PC-9 (cell line): ENCODE measurements at regions of chr2 and their contacts with region 1.

Region 1: DNA sequence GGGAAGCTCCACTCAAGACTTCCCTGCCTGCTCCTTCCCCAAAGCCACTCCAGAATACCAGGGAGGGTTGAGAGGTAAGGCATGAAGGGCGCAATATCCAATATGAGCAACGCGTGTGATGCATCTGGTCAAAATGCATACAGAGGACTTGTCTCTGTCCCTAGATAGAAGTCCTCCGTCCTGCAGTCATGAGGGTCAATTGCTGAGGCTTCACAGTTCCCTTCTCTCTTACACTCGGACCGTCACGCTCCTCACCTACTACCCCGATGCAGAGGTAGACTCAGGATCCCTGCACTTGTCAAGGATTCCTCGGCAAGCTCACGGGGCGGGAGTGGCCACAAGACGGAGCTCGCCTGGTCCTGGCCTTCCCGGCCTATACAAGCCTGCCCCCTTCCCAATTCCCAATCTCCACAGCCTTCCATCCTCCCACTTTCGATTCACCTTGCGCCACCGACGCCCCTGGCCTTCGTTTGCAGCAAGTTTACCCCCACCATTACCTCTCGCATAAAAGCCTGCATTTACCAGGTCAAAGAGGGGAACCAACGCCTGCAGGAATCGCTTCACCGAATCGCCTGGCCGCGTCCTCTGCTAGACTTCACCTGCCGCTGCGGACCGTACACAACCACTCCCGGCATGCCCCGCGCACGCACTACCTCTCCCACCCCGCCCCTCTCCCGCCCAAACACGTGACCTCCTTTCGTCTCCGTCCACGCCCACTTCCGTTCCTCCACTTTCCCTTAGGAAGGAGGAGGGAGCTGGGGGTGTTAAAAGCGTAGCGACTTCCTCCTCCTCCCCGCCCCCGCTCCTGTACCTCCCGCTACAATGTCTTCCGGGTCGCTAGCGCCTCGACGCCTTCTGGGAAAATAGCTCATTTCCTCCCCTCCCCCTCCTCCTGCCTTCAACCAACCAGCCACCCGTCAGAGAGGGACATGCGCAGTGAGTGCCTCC is at the start of gene ORC4:
- DNase-seq: peak; percentile 93 to 94
- H3K4me3 ChIP-seq: peak within 1 kb of the TSS; percentile 77
- H3K27ac ChIP-seq: peak within 1 kb of the TSS; percentile 68
- H3K4me1 ChIP-seq: peaks cover 28% of the 10 kb centered on the region
- H3K27me3 ChIP-seq: no peaks in the 10 kb centered on the region
- CTCF ChIP-seq: peak; percentile 36; the same call in 1 of the 2 replicates
- total RNA-seq, gene ORC4: 28.4 and 44.2 TPM in 2 replicates

Region 2: GRCh38 chr2:146927080-146927711 is 1093.2 kb before region 1 on chr2:
- CTCF ChIA-PET with region 1: interaction called, 27 read pairs
- POLR2A ChIA-PET with region 1: no interaction called
- intact Hi-C with region 1: no loop called
- DNase-seq: peak in 1 of 2 experiments; percentile 49
- H3K4me3 ChIP-seq: no peak overlapping the region
- H3K27ac ChIP-seq: no peak overlapping the region
- H3K4me1 ChIP-seq: no peaks in the 10 kb centered on the region
- H3K27me3 ChIP-seq: no peaks in the 10 kb centered on the region
- CTCF ChIP-seq: peak; percentile 61

Region 3: DNA sequence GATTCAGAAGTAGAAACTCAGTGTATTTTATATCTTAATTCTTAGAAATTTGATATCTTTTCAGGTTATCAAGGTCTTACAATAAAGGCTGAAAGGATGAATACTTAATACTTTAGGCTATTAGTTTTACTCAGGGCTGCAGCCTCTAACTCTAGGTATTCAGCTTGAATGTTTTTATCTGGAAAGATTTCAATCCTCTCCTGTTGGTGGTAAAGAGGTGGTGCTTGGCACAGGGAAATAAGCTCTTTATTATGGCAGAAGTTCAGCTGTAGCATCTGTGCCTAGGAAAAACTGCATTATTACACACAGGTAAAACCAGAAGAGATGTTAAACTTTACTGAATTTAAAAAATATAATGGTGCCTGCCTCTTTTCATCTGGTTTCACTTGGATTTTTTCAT is 164.4 kb before region 1 on chr2:
- CTCF ChIA-PET with region 1: no interaction called
- POLR2A ChIA-PET with region 1: no interaction called
- intact Hi-C with region 1: no loop called
- DNase-seq: no peak
- H3K4me3 ChIP-seq: no peak overlapping the region
- H3K27ac ChIP-seq: no peak overlapping the region
- H3K4me1 ChIP-seq: no peaks in the 10 kb centered on the region
- H3K27me3 ChIP-seq: no peaks in the 10 kb centered on the region
- CTCF ChIP-seq: no peak

Region 4: GRCh38 chr2:147980940-147981528 is 39.4 kb before region 1 on chr2:
- CTCF ChIA-PET with region 1: no interaction called
- POLR2A ChIA-PET with region 1: interaction called, 11 read pairs
- intact Hi-C with region 1: no loop called
- DNase-seq: no peak
- H3K4me3 ChIP-seq: no peak overlapping the region
- H3K27ac ChIP-seq: no peak overlapping the region
- H3K4me1 ChIP-seq: no peaks in the 10 kb centered on the region
- H3K27me3 ChIP-seq: no peaks in the 10 kb centered on the region
- CTCF ChIP-seq: no peak

Region 5: GRCh38 chr2:148110184-148110583 is 89.8 kb after region 1 on chr2:
- CTCF ChIA-PET with region 1: no interaction called
- POLR2A ChIA-PET with region 1: interaction called, 10 read pairs
- intact Hi-C with region 1: no loop called
- DNase-seq: no peak
- H3K4me3 ChIP-seq: no peak overlapping the region
- H3K27ac ChIP-seq: no peak overlapping the region
- H3K4me1 ChIP-seq: no peaks in the 10 kb centered on the region
- H3K27me3 ChIP-seq: no peaks in the 10 kb centered on the region
- CTCF ChIP-seq: no peak

Region 6: GRCh38 chr2:148259674-148260073 is 239.3 kb after region 1 on chr2:
- CTCF ChIA-PET with region 1: no interaction called
- POLR2A ChIA-PET with region 1: no interaction called
- intact Hi-C with region 1: no loop called
- DNase-seq: no peak
- H3K4me3 ChIP-seq: no peak overlapping the region
- H3K27ac ChIP-seq: no peak overlapping the region
- H3K4me1 ChIP-seq: no peaks in the 10 kb centered on the region
- H3K27me3 ChIP-seq: no peaks in the 10 kb centered on the region
- CTCF ChIP-seq: no peak

Region 7: DNA sequence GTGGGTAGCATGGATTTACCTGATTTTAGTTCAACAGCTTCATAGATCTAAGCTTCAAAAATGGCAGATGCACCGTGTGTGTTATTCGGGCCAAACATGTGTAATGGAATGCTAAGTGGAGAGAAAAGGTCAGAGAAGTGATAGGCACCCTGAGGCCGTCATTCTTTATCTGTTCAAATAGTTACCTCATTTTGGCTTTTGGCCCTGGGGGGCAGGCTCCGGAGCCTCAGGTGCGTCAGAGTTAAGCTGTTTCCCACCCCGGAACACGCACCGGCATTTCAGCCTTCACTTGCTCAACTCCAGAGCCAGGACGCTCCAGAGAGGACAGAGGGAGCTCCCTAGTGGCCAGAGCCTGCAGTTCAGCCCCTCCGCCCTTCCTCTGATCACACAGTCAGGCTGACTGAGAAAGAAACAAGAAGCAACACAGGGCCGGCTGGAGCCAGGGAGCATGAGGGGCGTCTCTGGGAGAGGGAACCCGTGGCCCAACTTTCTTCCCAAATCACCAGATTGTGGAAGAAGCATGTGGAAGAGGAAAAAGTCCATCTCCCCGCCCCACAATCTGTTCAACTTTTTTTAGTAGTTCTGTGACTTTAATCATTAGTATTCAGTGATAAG is 489.0 kb after region 1 on chr2:
- CTCF ChIA-PET with region 1: interaction called, 4 read pairs
- POLR2A ChIA-PET with region 1: interaction called, 58 read pairs
- intact Hi-C with region 1: no loop called
- DNase-seq: peak; percentile 63 to 80
- H3K4me3 ChIP-seq: peak overlapping the region; percentile 38; the same call in 1 of the 2 replicates
- H3K27ac ChIP-seq: no peak overlapping the region
- H3K4me1 ChIP-seq: peaks cover 9% of the 10 kb centered on the region
- H3K27me3 ChIP-seq: no peaks in the 10 kb centered on the region
- CTCF ChIP-seq: peak; percentile 79